ENCODE measurements at regions of chr3 and their contacts with region 1.

Region 1: GRCh38 chr3:129439817-129440617 is at the starts of genes IFT122 and MBD4:
- DNase-seq: peak; percentile 100
- H3K4me3 Mint-ChIP-seq: peak within 1 kb of the TSS; percentile 89
- H3K27ac Mint-ChIP-seq: peak within 1 kb of the TSS; percentile 98
- H3K4me1 Mint-ChIP-seq: peaks cover 63% of the 10 kb centered on the region
- H3K27me3 Mint-ChIP-seq: no peaks in the 10 kb centered on the region
- total RNA-seq, gene IFT122: 10.0 and 14.7 TPM in 2 replicates
- total RNA-seq, gene MBD4: 44.1 and 53.3 TPM in 2 replicates

Region 2: DNA sequence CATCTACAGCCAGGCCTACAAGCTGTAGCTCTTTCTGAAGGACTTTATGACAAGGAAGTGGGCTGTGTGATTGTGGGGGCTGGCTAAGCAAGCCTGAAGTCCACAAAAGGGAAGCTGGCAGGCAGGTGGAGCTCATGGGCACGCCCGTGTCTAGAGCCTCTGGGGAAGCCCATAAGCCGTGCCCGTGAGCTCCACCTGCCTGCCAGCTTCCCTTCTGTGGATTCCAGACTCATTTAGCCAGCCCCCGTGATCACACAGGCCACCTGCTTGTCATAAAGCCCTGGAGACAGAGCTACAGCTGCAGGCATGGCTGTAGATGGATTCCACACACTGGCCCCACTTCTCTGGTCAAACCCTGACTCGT is 423.7 kb before region 1 on chr3:
- intact Hi-C with region 1: no loop called
- DNase-seq: peak; percentile 31
- H3K4me3 Mint-ChIP-seq: peak overlapping the region; percentile 71
- H3K27ac Mint-ChIP-seq: peak overlapping the region; percentile 91
- H3K4me1 Mint-ChIP-seq: peaks cover 46% of the 10 kb centered on the region
- H3K27me3 Mint-ChIP-seq: peaks cover 2% of the 10 kb centered on the region

Region 3: DNA sequence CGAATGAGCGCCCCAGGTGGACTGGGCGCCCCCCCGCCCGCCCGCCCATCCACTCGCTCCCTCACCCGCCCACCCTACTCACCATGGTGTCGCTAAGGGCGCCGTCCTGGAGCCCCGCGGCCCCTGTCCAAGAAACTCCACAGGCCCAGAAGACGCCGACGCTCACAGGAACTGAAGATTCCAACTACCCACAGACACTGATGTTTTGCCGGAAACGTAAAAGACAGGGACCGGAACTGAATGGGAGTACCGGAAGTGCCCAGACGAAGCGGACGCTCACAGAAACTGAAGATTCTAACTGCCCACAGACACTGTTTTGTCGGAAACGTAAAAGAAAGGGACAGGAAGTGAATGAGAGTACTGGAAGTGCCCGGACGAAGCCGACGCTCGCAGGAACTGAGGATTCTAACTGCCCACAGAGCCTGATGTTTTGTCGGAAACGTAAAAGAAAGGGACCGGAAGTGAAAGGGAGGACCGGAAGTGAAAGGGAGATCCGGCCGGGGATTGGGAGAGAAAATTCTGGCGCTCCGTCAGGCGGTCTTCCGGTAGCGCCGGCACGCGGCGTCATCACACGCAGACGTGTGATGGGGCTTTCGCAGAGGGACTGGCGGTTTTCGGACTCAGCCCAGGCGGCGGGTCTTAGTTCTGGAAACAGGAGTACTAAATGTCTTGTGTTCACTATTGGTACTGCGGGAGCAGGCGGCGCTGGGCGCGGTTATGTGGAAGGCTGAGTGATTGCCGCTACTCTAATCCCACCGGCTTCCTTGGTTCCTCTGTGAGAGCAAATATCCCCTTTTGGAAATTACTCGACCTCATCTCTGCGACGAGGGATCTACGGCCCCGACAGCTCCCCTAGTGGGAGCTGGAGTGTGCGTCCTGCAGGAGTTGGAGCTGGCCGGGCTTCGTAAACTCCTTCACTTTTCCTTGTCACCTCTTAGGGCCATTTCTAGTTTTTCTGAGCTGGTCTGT is 278.8 kb before region 1 on chr3 and contains the start of gene ISY1:
- intact Hi-C with region 1: loop called (anchors 1 kb)
- DNase-seq: peak; percentile 88
- H3K4me3 Mint-ChIP-seq: peak within 1 kb of the TSS; percentile 97
- H3K27ac Mint-ChIP-seq: peak within 1 kb of the TSS; percentile 99
- H3K4me1 Mint-ChIP-seq: peaks cover 34% of the 10 kb centered on the region
- H3K27me3 Mint-ChIP-seq: no peaks in the 10 kb centered on the region
- total RNA-seq, gene ISY1: 72.3 and 75.4 TPM in 2 replicates

Region 4: GRCh38 chr3:129316131-129317013 is 123.6 kb before region 1 on chr3:
- intact Hi-C with region 1: loop called (anchors 2 kb)
- DNase-seq: peak; percentile 88
- H3K4me3 Mint-ChIP-seq: peak overlapping the region; percentile 81
- H3K27ac Mint-ChIP-seq: peak overlapping the region; percentile 80
- H3K4me1 Mint-ChIP-seq: peaks cover 32% of the 10 kb centered on the region
- H3K27me3 Mint-ChIP-seq: no peaks in the 10 kb centered on the region

Region 5: GRCh38 chr3:129428376-129429079 is 11.5 kb before region 1 on chr3 and contains the start of gene EFCAB12:
- intact Hi-C with region 1: loop called (anchors 1 kb)
- DNase-seq: peak; percentile 88
- H3K4me3 Mint-ChIP-seq: peak within 1 kb of the TSS; percentile 41
- H3K27ac Mint-ChIP-seq: peak within 1 kb of the TSS; percentile 69
- H3K4me1 Mint-ChIP-seq: peaks cover 51% of the 10 kb centered on the region
- H3K27me3 Mint-ChIP-seq: peaks cover 4% of the 10 kb centered on the region
- total RNA-seq, gene EFCAB12: 0.32 and 0.34 TPM in 2 replicates

Region 6: GRCh38 chr3:129606636-129607390 is 166.8 kb after region 1 on chr3 and contains the start of gene PLXND1:
- intact Hi-C with region 1: loop called (anchors 5 kb)
- DNase-seq: no peak
- H3K4me3 Mint-ChIP-seq: peak within 1 kb of the TSS; percentile 83
- H3K27ac Mint-ChIP-seq: peak within 1 kb of the TSS; percentile 90
- H3K4me1 Mint-ChIP-seq: peaks cover 5% of the 10 kb centered on the region
- H3K27me3 Mint-ChIP-seq: peaks cover 56% of the 10 kb centered on the region
- total RNA-seq, gene PLXND1: 1.3 and 1.7 TPM in 2 replicates

Region 7: GRCh38 chr3:129855454-129856419 is 415.7 kb after region 1 on chr3:
- intact Hi-C with region 1: no loop called
- DNase-seq: no peak
- H3K4me3 Mint-ChIP-seq: no peak overlapping the region
- H3K27ac Mint-ChIP-seq: no peak overlapping the region
- H3K4me1 Mint-ChIP-seq: peaks cover 8% of the 10 kb centered on the region
- H3K27me3 Mint-ChIP-seq: no peaks in the 10 kb centered on the region

Region 8: DNA sequence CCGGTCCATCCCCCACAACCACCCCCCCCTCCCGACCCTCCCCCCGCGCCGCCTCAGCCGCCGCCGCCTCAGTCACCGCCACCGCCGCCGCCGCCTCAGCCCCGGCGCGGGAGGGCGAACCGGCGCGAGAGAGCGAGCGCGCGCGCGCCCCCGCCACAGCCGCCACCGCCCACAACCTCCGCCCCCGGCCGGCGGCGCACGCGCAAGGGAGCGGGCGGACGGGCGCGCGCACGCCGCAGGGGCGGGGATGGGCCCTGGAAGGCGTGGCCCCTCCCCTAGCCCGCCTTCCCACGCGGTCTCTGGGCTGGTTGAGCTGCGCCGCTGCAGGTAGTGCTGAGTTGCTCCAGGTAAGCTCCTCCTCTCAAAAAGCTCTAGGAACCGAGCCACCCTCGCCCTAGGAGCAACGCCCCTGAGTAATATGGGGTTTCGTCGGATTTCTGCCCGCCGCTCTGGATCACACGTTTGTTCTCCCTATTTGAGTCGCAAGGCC is 453.6 kb after region 1 on chr3 and contains the start of gene TMCC1:
- intact Hi-C with region 1: loop called (anchors 2 kb)
- DNase-seq: peak; percentile 83
- H3K4me3 Mint-ChIP-seq: peak within 1 kb of the TSS; percentile 91
- H3K27ac Mint-ChIP-seq: peak within 1 kb of the TSS; percentile 89
- H3K4me1 Mint-ChIP-seq: peaks cover 47% of the 10 kb centered on the region
- H3K27me3 Mint-ChIP-seq: no peaks in the 10 kb centered on the region
- total RNA-seq, gene TMCC1: 17.1 and 22.4 TPM in 2 replicates